Dendritic cell treated with granulocyte-macrophage colony-stimulating factor and Interleukin-4, amounts not matched to agents 40 ng/mL and 50 ng/mL, for 4 days (primary cell): ENCODE measurements at regions of chr17 and their contacts with region 1.

Region 1: GRCh38 chr17:2244545-2245525 is 58.8 kb downstream of the SMG6 start:
- H3K4me3 Mint-ChIP-seq: no peak overlapping the region
- H3K27ac Mint-ChIP-seq: no peak overlapping the region
- H3K4me1 Mint-ChIP-seq: no peaks in the 10 kb centered on the region
- H3K27me3 Mint-ChIP-seq: no peaks in the 10 kb centered on the region

Region 2: GRCh38 chr17:2054512-2055291 is 190.1 kb before region 1 on chr17 and contains the start of gene HIC1:
- intact Hi-C with region 1: loop called (anchors 1 kb)
- H3K4me3 Mint-ChIP-seq: peak within 1 kb of the TSS; percentile 49
- H3K27ac Mint-ChIP-seq: no peak within 1 kb of the TSS
- H3K4me1 Mint-ChIP-seq: peaks cover 41% of the 10 kb centered on the region
- H3K27me3 Mint-ChIP-seq: peaks cover 52% of the 10 kb centered on the region